ENCODE measurements at regions of chr15 and their contacts with region 1.

Region 1: DNA sequence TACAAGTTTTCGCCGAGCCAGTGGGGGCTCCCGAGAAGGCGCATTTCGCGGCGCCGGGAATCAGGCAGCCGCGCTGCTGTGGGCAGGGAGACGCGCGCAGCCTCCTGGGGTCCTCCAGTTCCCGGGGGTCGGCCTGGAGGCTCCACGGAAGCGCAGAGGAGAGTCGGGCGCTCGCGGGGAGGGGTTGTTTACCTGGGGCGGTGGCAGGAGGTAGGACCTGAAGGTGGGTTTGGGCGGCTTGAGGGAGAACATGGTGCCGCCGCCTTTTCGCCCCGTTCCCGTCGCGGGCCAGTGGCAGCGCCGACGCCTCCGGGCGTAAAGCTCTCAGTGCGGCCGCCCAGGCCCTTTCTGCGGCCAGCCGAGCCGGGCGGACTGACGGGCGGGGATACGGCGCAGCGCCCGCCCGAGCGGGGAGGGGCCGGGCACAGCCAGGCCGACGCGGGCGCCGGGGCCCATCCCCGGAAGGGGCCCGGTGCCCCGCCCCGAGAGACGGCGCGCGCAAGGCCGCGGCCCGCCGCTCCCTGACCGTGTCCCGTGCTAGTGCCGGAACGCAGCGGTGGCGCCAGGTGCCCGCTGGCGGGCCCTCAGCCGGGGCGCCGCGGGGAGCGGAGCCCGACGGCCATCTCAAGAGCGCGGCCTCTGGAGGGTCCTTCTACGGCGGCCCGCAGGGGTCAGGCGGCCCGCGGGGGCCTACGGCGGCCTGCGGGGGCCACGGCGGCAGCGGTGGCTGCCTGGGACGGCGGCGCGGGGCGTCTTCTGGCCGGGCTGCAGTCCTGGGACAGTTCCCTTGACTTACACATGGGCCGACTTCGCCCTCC is at the start of gene MTMR10:
- DNase-seq: peak; percentile 54 to 84 (median 82)
- ATAC-seq: peak; percentile 96
- H3K4me3 ChIP-seq: peak within 1 kb of the TSS; percentile 96
- H3K4me3 Mint-ChIP-seq: peak within 1 kb of the TSS; percentile 91 to 97 (median 95)
- H3K27ac ChIP-seq: peak within 1 kb of the TSS; percentile 89
- H3K27ac Mint-ChIP-seq: peak within 1 kb of the TSS; percentile 90 to 98 (median 93)
- H3K4me1 ChIP-seq: peaks cover 23 to 27% of the 10 kb centered on the region in 2 donors
- H3K4me1 Mint-ChIP-seq: peaks cover 22 to 49% (median 37%) of the 10 kb centered on the region in 7 donors
- H3K27me3 ChIP-seq: no peaks in the 10 kb centered on the region
- H3K27me3 Mint-ChIP-seq: peaks cover 0 to 13% (median 0%) of the 10 kb centered on the region in 5 donors
- total RNA-seq, gene MTMR10: 21.2 to 50.8 (median 34.0) TPM

Region 2: DNA sequence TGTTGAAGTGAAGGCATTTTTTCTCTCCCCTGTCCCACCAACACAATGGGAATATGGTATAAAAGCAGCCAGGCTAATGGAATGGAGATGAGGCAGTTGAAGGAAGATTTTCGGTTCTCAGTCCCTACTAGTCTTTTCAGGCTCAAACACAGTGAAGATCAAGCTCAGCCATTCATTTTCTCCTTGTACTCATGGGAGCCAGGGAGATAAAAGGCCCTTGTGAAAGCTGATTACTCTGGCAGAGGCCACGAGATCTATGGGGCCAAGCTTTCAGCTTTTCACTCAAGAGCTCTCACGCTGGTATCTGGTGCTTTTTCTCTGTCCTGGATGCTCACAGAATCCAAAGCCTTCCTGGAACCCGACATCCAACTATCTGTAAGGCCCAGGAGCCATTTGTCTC is 102.3 kb before region 1 on chr15:
- CTCF ChIA-PET with region 1: no interaction called
- POLR2A ChIA-PET with region 1: no interaction called
- intact Hi-C with region 1: no loop called
- DNase-seq: no peak
- ATAC-seq: no peak
- H3K4me3 ChIP-seq: no peak overlapping the region
- H3K4me3 Mint-ChIP-seq: no peak overlapping the region
- H3K27ac ChIP-seq: no peak overlapping the region
- H3K27ac Mint-ChIP-seq: no peak overlapping the region
- H3K4me1 ChIP-seq: no peaks in the 10 kb centered on the region
- H3K4me1 Mint-ChIP-seq: peaks cover 0 to 12% (median 0%) of the 10 kb centered on the region in 7 donors
- H3K27me3 ChIP-seq: no peaks in the 10 kb centered on the region
- H3K27me3 Mint-ChIP-seq: no peaks in the 10 kb centered on the region

Region 3: DNA sequence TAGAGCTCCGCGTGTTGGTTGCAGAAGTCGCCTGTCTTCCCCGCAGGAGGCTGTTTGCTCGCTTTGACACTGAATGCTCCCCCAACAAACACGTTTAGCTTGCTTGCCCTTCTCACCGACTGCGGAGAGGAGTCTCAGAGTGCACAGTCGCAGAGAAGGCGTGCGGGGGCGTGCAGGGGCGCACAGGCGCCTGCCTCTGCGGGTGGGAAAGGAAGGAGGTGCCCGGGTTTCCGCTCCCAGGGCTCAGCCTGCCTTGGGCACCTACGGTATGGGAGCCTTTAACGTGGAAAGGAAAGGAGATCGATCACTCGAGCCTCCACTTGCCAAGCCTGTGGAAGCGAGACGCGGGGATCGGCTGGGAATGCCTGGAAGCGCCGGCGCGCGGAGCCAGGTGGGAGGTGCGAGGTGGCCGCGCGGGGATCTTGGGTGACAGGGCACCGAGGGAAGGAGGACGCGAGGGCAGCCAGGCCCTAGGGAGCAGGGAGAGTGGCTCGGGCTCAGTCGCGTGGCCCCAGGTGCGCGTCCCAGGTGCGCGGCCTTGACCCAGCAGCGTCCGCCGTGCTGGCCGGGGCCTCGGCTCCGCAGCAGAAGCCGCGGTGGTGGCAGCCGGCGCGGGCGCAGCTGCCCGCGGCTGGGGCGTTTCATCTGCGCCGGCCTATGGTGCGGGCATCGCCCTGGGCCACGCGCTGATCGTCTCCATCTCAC is 87.8 kb before region 1 on chr15 and contains the start of gene FAN1:
- CTCF ChIA-PET with region 1: no interaction called
- POLR2A ChIA-PET with region 1: no interaction called
- intact Hi-C with region 1: loop called in 1 of 2 experiments (anchors 1 kb)
- DNase-seq: peak; percentile 52 to 81 (median 68)
- ATAC-seq: peak; percentile 92
- H3K4me3 ChIP-seq: peak within 1 kb of the TSS; percentile 96
- H3K4me3 Mint-ChIP-seq: peak within 1 kb of the TSS; percentile 93 to 100 (median 96)
- H3K27ac ChIP-seq: peak within 1 kb of the TSS; percentile 47
- H3K27ac Mint-ChIP-seq: peak within 1 kb of the TSS; percentile 75 to 93 (median 88)
- H3K4me1 ChIP-seq: no peaks in the 10 kb centered on the region
- H3K4me1 Mint-ChIP-seq: peaks cover 19 to 59% (median 37%) of the 10 kb centered on the region in 7 donors
- H3K27me3 ChIP-seq: no peaks in the 10 kb centered on the region
- H3K27me3 Mint-ChIP-seq: no peaks in the 10 kb centered on the region
- total RNA-seq, gene FAN1: 24.0 to 29.5 (median 28.2) TPM

Region 4: DNA sequence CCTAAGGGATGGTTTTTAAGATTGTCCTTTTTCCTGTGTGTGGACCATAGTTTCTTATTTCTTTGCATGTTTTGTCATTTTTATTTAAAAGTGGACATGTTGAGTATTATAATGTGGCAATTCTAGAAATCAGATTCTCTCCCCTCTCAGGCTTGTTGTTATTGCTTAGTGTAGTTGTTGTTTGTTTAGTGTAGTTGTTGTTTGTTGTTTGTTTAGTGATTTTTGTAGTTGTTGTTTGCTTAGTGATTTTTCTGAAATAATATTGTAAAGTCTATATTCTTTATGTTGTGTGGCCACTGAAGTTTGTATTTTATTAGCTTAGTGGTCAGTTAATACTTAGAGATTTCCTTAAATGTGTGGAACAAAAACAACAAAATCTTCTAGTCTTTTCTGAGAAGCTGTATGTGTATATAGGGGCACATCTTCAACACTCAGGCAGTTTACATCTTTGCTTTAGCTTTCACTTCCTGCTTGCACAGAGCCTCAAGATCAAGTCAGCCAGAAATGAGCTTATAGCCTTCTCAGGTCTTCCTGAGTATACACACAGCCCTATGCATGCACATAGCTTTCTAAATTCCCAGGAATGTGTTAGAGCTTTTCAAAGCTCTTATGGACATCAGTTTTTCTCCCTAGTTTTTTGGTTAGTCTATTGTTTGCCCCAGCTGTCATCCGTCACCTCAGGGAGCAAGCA is 22.2 kb after region 1 on chr15:
- CTCF ChIA-PET with region 1: interaction called, 3 read pairs
- POLR2A ChIA-PET with region 1: interaction called, 21 read pairs
- intact Hi-C with region 1: loop called in 1 of 2 experiments (anchors 2 kb)
- DNase-seq: peak in 6 of 9 donors; percentile 10 to 64 (median 45)
- ATAC-seq: peak; percentile 77
- H3K4me3 ChIP-seq: no peak overlapping the region
- H3K4me3 Mint-ChIP-seq: peak overlapping the region in 9 of 10 donors; percentile 7 to 68 (median 51)
- H3K27ac ChIP-seq: peak overlapping the region; percentile 1
- H3K27ac Mint-ChIP-seq: peak overlapping the region; percentile 39 to 94 (median 81)
- H3K4me1 ChIP-seq: peaks cover 0 to 15% of the 10 kb centered on the region in 2 donors
- H3K4me1 Mint-ChIP-seq: peaks cover 13 to 24% (median 23%) of the 10 kb centered on the region in 7 donors
- H3K27me3 ChIP-seq: no peaks in the 10 kb centered on the region
- H3K27me3 Mint-ChIP-seq: peaks cover 0 to 17% (median 4%) of the 10 kb centered on the region in 5 donors

Region 5: DNA sequence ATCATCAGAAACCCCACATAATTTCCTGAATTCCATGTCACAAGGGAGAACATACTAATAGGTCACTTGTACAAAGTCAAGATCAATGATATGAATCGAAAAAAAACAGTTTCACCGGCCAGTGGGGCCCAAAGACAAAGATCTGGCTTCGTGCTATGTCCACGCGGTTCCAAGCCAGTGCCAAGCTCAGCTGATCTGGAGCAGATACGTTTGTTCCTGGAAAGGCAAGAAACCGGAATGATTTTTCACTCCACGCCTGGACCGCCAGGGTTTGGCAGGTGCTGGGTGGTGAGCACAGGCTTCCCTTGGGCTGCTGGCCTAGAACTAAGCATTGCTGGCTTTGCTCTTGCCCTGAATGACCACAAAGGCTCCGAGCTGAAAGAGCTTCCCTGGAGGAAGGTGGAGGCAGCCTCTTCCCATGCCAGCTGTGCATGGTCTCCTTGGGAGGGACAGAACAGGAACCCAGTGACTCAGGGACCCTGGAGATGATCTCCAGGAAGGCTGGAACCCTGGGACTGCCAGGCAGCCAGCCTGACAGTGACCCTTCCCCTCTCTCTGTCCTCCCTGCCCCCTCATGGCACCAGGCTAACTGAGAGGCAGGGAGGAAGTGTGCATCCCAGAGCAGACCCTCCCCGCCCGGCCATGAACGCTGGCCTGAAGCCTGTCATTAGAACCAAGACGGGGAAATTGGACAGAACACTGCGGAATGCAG is 69.1 kb after region 1 on chr15:
- CTCF ChIA-PET with region 1: no interaction called
- POLR2A ChIA-PET with region 1: no interaction called
- intact Hi-C with region 1: no loop called
- DNase-seq: no peak
- ATAC-seq: no peak
- H3K4me3 ChIP-seq: no peak overlapping the region
- H3K4me3 Mint-ChIP-seq: no peak overlapping the region
- H3K27ac ChIP-seq: no peak overlapping the region
- H3K27ac Mint-ChIP-seq: no peak overlapping the region
- H3K4me1 ChIP-seq: no peaks in the 10 kb centered on the region
- H3K4me1 Mint-ChIP-seq: no peaks in the 10 kb centered on the region
- H3K27me3 ChIP-seq: no peaks in the 10 kb centered on the region
- H3K27me3 Mint-ChIP-seq: peaks cover 0 to 27% (median 6%) of the 10 kb centered on the region in 5 donors

Region 6: DNA sequence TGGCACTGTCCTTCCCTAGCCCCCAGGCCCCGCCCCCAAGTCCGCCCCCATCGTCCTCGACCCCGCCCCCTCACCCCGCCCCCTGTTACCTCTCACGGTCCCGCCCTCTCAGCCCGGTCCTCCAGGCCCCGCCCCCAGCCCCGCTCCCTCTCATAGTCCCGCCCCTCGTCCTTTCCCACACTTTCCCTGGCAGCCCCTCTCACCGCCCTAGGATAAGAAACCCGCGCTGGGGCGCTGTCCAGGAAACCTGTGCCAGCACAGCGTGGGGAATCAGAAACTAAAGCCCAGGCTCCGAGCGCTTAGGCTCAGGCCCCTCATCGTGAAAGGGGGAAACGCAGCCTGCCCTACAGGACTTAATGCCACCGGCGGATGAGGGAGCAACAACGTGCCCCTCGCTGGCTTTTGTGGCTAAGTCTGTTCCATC is 89.1 kb after region 1 on chr15:
- CTCF ChIA-PET with region 1: no interaction called
- POLR2A ChIA-PET with region 1: no interaction called
- intact Hi-C with region 1: loop called in 1 of 2 experiments (anchors 5 kb)
- DNase-seq: peak in 4 of 9 donors; percentile 6 to 32 (median 12)
- ATAC-seq: peak; percentile 72
- H3K4me3 ChIP-seq: no peak overlapping the region
- H3K4me3 Mint-ChIP-seq: peak overlapping the region; percentile 26 to 80 (median 61)
- H3K27ac ChIP-seq: no peak overlapping the region
- H3K27ac Mint-ChIP-seq: no peak overlapping the region
- H3K4me1 ChIP-seq: no peaks in the 10 kb centered on the region
- H3K4me1 Mint-ChIP-seq: peaks cover 2 to 21% (median 6%) of the 10 kb centered on the region in 7 donors
- H3K27me3 ChIP-seq: peaks cover 3 to 4% of the 10 kb centered on the region in 2 donors
- H3K27me3 Mint-ChIP-seq: peaks cover 7 to 36% (median 22%) of the 10 kb centered on the region in 5 donors

Region 7: GRCh38 chr15:31128919-31129768 is 137.7 kb after region 1 on chr15:
- CTCF ChIA-PET with region 1: no interaction called
- POLR2A ChIA-PET with region 1: no interaction called
- intact Hi-C with region 1: loop called in 1 of 2 experiments (anchors 1 kb)
- DNase-seq: peak; percentile 47 to 81 (median 72)
- ATAC-seq: peak; percentile 91
- H3K4me3 ChIP-seq: no peak overlapping the region
- H3K4me3 Mint-ChIP-seq: no peak overlapping the region
- H3K27ac ChIP-seq: no peak overlapping the region
- H3K27ac Mint-ChIP-seq: no peak overlapping the region
- H3K4me1 ChIP-seq: no peaks in the 10 kb centered on the region
- H3K4me1 Mint-ChIP-seq: peaks cover 0 to 4% (median 0%) of the 10 kb centered on the region in 7 donors
- H3K27me3 ChIP-seq: no peaks in the 10 kb centered on the region
- H3K27me3 Mint-ChIP-seq: peaks cover 0 to 6% (median 0%) of the 10 kb centered on the region in 5 donors

Region 8: GRCh38 chr15:31483053-31483985 is 491.9 kb after region 1 on chr15:
- CTCF ChIA-PET with region 1: no interaction called
- POLR2A ChIA-PET with region 1: interaction called, 4 read pairs
- intact Hi-C with region 1: loop called (anchors 1 to 2 kb)
- DNase-seq: peak; percentile 42 to 63 (median 53)
- ATAC-seq: peak; percentile 80
- H3K4me3 ChIP-seq: peak overlapping the region; percentile 59
- H3K4me3 Mint-ChIP-seq: peak overlapping the region; percentile 91 to 97 (median 96)
- H3K27ac ChIP-seq: no peak overlapping the region
- H3K27ac Mint-ChIP-seq: peak overlapping the region; percentile 90 to 97 (median 94)
- H3K4me1 ChIP-seq: peaks cover 26 to 35% of the 10 kb centered on the region in 2 donors
- H3K4me1 Mint-ChIP-seq: peaks cover 25 to 75% (median 54%) of the 10 kb centered on the region in 7 donors
- H3K27me3 ChIP-seq: no peaks in the 10 kb centered on the region
- H3K27me3 Mint-ChIP-seq: no peaks in the 10 kb centered on the region

Measured in naive thymus-derived CD4-positive, alpha-beta T cell (primary cell).